SK-N-SH (cell line): ENCODE measurements at regions of chr11 and their contacts with region 1.

Region 1: GRCh38 chr11:64131683-64132190 is 34.2 kb downstream of the MACROD1 start:
- DNase-seq: no peak
- H3K4me3 ChIP-seq: no peak overlapping the region
- H3K27ac ChIP-seq: peak overlapping the region in 1 of 2 experiments; percentile 94; a peak in 2 of 4 replicates
- H3K4me1 ChIP-seq: peaks cover 0 to 56% of the 10 kb centered on the region in 2 experiments; a peak in 2 of 4 replicates
- H3K27me3 ChIP-seq: no peaks in the 10 kb centered on the region
- CTCF ChIP-seq: no peak
- EP300 ChIP-seq: no peak
- RAD21 ChIP-seq: no peak

Region 2: DNA sequence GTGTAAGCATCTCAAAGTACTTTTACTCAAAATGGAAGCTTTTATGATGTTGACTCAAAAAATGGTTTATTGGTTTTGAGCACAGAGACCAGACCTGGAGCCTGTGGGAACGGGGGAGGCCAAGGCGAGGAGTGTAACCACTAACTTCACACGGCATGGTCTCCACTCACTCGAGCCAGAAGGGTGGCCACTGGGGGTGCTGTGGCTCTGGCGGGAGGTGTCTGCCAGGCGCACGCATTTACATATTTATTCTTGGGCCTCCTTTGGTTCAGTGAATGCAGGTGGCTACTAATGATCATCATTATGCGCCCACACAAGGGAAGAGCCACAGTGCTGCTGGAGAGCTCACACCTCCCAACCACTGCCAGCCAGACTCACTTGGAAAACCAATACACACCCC is 31.4 kb before region 1 on chr11:
- CTCF ChIA-PET with region 1: interaction called, 14 read pairs
- POLR2A ChIA-PET with region 1: no interaction called
- DNase-seq: no peak
- H3K4me3 ChIP-seq: no peak overlapping the region
- H3K27ac ChIP-seq: peak overlapping the region in 1 of 2 experiments; percentile 93; a peak in 1 of 4 replicates
- H3K4me1 ChIP-seq: peaks cover 0 to 94% of the 10 kb centered on the region in 2 experiments; a peak in 2 of 4 replicates
- H3K27me3 ChIP-seq: no peaks in the 10 kb centered on the region
- CTCF ChIP-seq: 0 out of 2 replicates have a peak, but pooled peaks have one; percentile 17
- EP300 ChIP-seq: no peak
- RAD21 ChIP-seq: no peak

Region 3: DNA sequence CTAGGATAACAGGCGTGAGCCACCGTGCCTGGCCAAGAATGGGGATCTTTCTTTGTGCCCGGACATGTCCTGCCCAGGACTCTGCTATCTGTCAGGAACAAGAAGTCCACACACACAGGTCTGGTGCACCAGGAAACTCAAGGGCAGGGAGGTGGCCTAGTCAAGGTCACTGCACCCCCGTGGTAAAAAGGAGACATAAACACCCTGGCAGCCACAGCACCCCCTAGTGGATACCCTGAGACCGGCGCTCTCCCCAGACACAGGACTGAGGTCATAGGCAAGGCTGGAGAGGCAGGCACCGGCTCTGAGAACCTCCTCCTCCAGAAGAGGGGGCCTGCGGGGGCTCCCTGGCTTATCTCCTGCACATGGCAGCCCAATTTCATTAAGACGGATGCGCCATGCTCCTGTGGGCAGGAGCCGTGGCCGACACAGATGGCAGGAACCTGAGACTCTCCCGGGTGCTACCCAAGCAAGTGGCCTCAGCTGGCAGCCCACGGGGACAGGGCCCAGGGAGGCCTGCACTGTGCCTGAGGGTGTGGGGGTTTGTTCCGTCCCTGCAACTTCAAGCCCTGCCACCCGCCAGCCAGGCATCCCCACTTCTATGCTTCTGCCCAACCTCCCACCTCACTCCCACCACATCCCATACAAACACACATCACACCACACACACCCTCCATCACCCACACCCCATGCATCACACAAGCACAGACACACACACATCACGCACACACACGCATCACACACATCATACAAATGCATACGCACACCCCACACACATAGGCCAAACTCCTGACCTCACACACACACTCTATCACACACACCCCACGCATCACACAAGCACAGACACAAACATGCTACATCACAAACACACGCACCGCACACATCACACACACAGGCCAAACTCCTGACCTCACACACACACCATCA is 14.6 kb after region 1 on chr11:
- CTCF ChIA-PET with region 1: interaction called, 33 read pairs
- POLR2A ChIA-PET with region 1: interaction called, 9 read pairs
- DNase-seq: peak; percentile 87
- H3K4me3 ChIP-seq: no peak overlapping the region; a peak in 1 of 4 replicates
- H3K27ac ChIP-seq: peak overlapping the region in 1 of 2 experiments; percentile 93; a peak in 2 of 4 replicates
- H3K4me1 ChIP-seq: peaks cover 0 to 78% of the 10 kb centered on the region in 2 experiments; a peak in 2 of 4 replicates
- H3K27me3 ChIP-seq: no peaks in the 10 kb centered on the region
- CTCF ChIP-seq: peak; percentile 76
- EP300 ChIP-seq: peak in 1 of 2 experiments; percentile 94; a peak in 2 of 4 replicates
- RAD21 ChIP-seq: peak; percentile 67

Region 4: GRCh38 chr11:64207256-64208085 is 75.7 kb after region 1 on chr11:
- CTCF ChIA-PET with region 1: no interaction called
- POLR2A ChIA-PET with region 1: no interaction called
- DNase-seq: peak; percentile 41
- H3K4me3 ChIP-seq: no peak overlapping the region
- H3K27ac ChIP-seq: peak overlapping the region in 1 of 2 experiments; percentile 48; a peak in 3 of 4 replicates
- H3K4me1 ChIP-seq: peaks cover 4 to 27% of the 10 kb centered on the region in 2 experiments; a peak in 3 of 4 replicates
- H3K27me3 ChIP-seq: no peaks in the 10 kb centered on the region
- CTCF ChIP-seq: no peak
- EP300 ChIP-seq: no peak
- RAD21 ChIP-seq: no peak

Region 5: GRCh38 chr11:64409707-64410403 is 278.1 kb after region 1 on chr11:
- CTCF ChIA-PET with region 1: no interaction called
- POLR2A ChIA-PET with region 1: no interaction called
- DNase-seq: no peak
- H3K4me3 ChIP-seq: no peak overlapping the region
- H3K27ac ChIP-seq: no peak overlapping the region
- H3K4me1 ChIP-seq: peaks cover 0 to 8% of the 10 kb centered on the region in 2 experiments; a peak in 1 of 4 replicates
- H3K27me3 ChIP-seq: no peaks in the 10 kb centered on the region
- CTCF ChIP-seq: no peak
- EP300 ChIP-seq: no peak
- RAD21 ChIP-seq: no peak